CD8-positive, alpha-beta T cell (primary cell): ENCODE measurements at regions of chr19 and their contacts with region 1.

Region 1: GRCh38 chr19:29714953-29715700 is at the start of gene C19orf12:
- DNase-seq: peak; percentile 21 to 78 (median 52)
- ATAC-seq: peak; percentile 54
- H3K4me3 ChIP-seq: peak within 1 kb of the TSS; percentile 77 to 88
- H3K4me3 Mint-ChIP-seq: peak within 1 kb of the TSS; percentile 86
- H3K27ac ChIP-seq: peak within 1 kb of the TSS; percentile 89 to 99
- H3K27ac Mint-ChIP-seq: peak within 1 kb of the TSS; percentile 97
- H3K4me1 ChIP-seq: peaks cover 54% of the 10 kb centered on the region
- H3K4me1 Mint-ChIP-seq: peaks cover 53% of the 10 kb centered on the region
- H3K27me3 ChIP-seq: no peaks in the 10 kb centered on the region
- H3K27me3 Mint-ChIP-seq: no peaks in the 10 kb centered on the region
- CTCF ChIP-seq: no peak
- total RNA-seq, gene C19orf12: 7.0 to 8.9 TPM

Region 2: DNA sequence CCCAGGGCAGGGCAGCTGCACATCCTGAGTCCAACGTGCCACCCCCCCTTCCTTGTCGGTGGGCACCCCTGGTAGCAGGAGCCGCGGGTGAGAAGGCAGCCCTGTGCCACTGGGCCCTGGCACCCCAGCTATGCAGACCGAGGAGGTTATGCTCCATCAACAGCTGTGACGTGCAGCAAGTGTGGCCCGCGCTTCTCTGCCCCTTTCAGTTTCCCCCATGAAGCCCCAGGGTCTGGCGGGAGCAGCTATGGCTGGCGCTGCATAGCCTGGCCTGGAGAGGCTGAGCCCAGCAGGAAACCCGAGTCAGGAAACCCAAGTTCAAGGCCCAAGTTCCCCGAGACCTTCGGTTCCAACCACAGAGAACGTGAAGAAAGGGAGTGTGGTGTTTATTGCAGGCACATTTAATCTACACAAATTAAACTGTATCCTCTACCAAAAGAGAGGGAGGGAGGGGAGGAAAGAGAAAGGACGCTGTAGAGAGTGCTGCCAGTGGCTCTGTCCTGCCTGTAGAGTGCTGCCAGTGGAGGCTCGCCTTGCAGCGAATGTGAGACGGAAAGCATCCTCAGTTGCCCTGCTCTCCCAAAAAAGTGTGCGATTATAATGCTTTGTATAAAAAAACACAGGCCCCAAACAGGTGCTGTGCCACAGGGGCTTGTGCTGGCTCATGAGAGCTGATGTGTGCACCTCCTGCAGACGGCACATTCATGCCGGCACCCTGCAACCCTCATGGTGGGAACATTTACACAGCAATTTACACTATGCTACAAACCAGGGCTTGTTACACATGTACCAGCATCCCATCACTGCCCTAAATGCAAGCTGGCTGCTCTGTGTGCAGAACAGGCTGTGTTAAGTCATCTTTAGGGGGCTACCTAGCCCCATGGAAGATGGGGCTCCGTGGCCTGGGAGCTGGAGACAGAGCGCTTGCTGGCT is 92.7 kb before region 1 on chr19:
- CTCF ChIA-PET with region 1: interaction called, 18 read pairs
- POLR2A ChIA-PET with region 1: no interaction called
- intact Hi-C with region 1: no loop called
- DNase-seq: peak in 6 of 9 experiments; percentile 26 to 73 (median 57)
- ATAC-seq: peak; percentile 65
- H3K4me3 ChIP-seq: peak overlapping the region; percentile 1 to 13
- H3K4me3 Mint-ChIP-seq: peak overlapping the region; percentile 68
- H3K27ac ChIP-seq: peak overlapping the region; percentile 2 to 66
- H3K27ac Mint-ChIP-seq: peak overlapping the region; percentile 75
- H3K4me1 ChIP-seq: peaks cover 47% of the 10 kb centered on the region
- H3K4me1 Mint-ChIP-seq: peaks cover 46% of the 10 kb centered on the region
- H3K27me3 ChIP-seq: no peaks in the 10 kb centered on the region
- H3K27me3 Mint-ChIP-seq: no peaks in the 10 kb centered on the region
- CTCF ChIP-seq: no peak

Region 3: DNA sequence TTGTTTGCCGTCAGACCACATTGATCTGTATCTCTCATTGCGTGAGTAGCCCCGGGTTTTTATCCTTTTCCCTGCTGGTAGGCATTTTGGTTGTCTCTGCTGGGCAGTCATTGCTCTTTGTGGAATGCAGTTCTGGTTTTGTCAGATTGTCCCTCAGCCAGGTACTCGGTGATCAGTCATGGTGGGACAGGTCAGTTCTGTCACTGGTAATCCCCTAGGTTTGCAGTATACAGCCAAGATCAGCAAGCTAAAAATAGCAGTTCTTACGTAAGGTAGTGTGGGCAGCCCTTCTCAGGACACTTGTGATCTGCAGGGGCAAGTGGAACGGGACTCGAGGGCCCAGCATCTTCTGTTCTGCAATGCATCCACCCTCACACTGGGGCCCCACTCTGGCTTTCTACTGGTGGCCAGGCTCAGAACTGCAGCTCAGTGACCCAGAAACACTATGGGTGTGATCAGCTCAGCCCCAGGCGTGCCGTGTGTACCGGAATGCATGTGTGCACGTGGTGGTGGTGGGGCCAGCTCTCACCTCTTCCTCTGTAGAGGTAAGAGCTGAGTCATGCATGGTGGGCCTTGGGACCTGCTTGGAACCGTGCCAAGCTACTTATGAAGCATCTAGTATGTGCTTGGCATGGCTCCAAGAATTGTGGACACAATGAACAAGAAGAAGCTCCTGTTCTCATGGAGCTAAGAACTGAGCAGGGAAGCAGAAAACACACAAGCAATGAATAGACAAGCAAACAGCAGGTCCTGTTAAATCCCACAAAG is 43.5 kb before region 1 on chr19:
- CTCF ChIA-PET with region 1: interaction called, 79 read pairs
- POLR2A ChIA-PET with region 1: interaction called, 47 read pairs
- intact Hi-C with region 1: loop called (anchors 2 kb)
- DNase-seq: peak; percentile 73 to 96 (median 91)
- ATAC-seq: peak; percentile 62
- H3K4me3 ChIP-seq: peak overlapping the region; percentile 16 to 26
- H3K4me3 Mint-ChIP-seq: peak overlapping the region; percentile 49
- H3K27ac ChIP-seq: peak overlapping the region; percentile 80 to 84
- H3K27ac Mint-ChIP-seq: peak overlapping the region; percentile 94
- H3K4me1 ChIP-seq: peaks cover 97% of the 10 kb centered on the region
- H3K4me1 Mint-ChIP-seq: peaks cover 90% of the 10 kb centered on the region
- H3K27me3 ChIP-seq: no peaks in the 10 kb centered on the region
- H3K27me3 Mint-ChIP-seq: no peaks in the 10 kb centered on the region
- CTCF ChIP-seq: peak; percentile 62

Region 4: DNA sequence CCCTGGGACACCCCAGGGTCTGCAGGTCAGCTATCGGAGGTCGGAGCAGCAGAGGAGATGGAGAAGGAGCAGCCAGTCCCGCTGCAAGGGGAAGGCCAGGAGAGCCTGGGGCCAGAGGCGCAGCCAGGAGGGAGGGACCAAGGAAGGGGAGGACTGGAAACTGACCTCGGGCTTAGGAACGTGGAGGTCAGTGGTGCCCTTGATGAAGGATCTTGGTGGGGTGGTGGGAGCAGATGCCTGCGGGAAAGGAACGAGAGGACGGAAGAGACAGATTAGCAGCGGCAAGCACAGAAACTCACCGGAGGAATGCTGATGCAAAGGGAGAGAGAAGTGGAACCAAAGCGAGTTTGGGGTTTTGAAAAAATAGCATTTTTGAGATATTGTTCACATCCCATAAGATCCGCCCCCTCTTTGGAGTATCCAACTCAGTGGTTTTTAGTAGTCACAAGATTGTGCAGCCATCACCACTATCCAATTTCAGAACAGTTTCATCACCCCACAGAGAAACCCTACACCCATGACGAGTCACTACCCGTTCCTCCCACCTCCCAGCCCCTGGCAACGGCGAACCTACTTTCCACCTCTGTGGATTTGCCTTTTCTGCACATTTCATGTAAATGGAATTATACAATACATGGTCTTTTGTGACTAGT is 27.8 kb before region 1 on chr19:
- CTCF ChIA-PET with region 1: interaction called, 371 read pairs
- POLR2A ChIA-PET with region 1: interaction called, 4 read pairs
- intact Hi-C with region 1: no loop called
- DNase-seq: no peak
- ATAC-seq: no peak
- H3K4me3 ChIP-seq: no peak overlapping the region
- H3K4me3 Mint-ChIP-seq: no peak overlapping the region
- H3K27ac ChIP-seq: no peak overlapping the region
- H3K27ac Mint-ChIP-seq: no peak overlapping the region
- H3K4me1 ChIP-seq: peaks cover 13% of the 10 kb centered on the region
- H3K4me1 Mint-ChIP-seq: peaks cover 26% of the 10 kb centered on the region
- H3K27me3 ChIP-seq: no peaks in the 10 kb centered on the region
- H3K27me3 Mint-ChIP-seq: no peaks in the 10 kb centered on the region
- CTCF ChIP-seq: no peak

Region 5: GRCh38 chr19:29704562-29705558 is 10.3 kb before region 1 on chr19:
- CTCF ChIA-PET with region 1: interaction called, 81 read pairs
- POLR2A ChIA-PET with region 1: interaction called, 6 read pairs
- intact Hi-C with region 1: no loop called
- DNase-seq: peak in 1 of 9 experiments; percentile 27
- ATAC-seq: peak; percentile 66
- H3K4me3 ChIP-seq: no peak overlapping the region
- H3K4me3 Mint-ChIP-seq: no peak overlapping the region
- H3K27ac ChIP-seq: no peak overlapping the region
- H3K27ac Mint-ChIP-seq: peak overlapping the region; percentile 75
- H3K4me1 ChIP-seq: peaks cover 33% of the 10 kb centered on the region
- H3K4me1 Mint-ChIP-seq: peaks cover 31% of the 10 kb centered on the region
- H3K27me3 ChIP-seq: no peaks in the 10 kb centered on the region
- H3K27me3 Mint-ChIP-seq: no peaks in the 10 kb centered on the region
- CTCF ChIP-seq: no peak

Region 6: DNA sequence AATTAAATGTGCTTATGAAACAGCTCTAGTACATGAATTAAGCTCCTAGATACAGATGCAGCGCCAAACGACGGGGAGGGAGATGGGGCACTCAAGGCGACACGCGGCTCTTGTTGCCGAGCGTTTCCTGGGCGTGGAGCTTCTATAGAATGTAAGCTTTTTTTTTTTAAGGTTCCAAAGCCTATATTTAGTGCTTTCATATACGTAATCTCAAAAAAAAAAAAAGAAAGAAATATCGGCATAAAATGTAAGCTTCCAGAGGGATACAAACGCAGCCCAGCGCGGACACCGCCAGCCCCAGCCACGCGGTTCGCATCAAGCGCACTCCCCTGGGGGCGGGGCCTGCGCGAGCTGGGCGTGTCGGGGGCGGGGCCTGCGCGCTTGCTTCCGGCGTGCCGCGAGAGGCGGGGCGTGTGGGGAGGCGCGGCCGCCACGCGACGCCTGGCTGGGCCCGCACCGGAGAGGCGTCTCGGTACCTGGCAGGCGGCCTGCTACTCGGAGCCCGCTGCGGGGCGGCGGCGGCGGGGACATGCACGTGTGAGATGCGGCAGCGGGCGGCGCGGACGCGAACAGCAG is 226.8 kb after region 1 on chr19 and contains the start of gene URI1:
- CTCF ChIA-PET with region 1: no interaction called
- POLR2A ChIA-PET with region 1: interaction called, 6 read pairs
- intact Hi-C with region 1: loop called (anchors 2 to 5 kb)
- DNase-seq: peak; percentile 87 to 98 (median 92)
- ATAC-seq: peak; percentile 92
- H3K4me3 ChIP-seq: peak within 1 kb of the TSS; percentile 81 to 85
- H3K4me3 Mint-ChIP-seq: peak within 1 kb of the TSS; percentile 97
- H3K27ac ChIP-seq: peak within 1 kb of the TSS; percentile 59 to 64
- H3K27ac Mint-ChIP-seq: peak within 1 kb of the TSS; percentile 94
- H3K4me1 ChIP-seq: peaks cover 40% of the 10 kb centered on the region
- H3K4me1 Mint-ChIP-seq: peaks cover 47% of the 10 kb centered on the region
- H3K27me3 ChIP-seq: peaks cover 0 to 2% of the 10 kb centered on the region in 2 experiments
- H3K27me3 Mint-ChIP-seq: peaks cover 3% of the 10 kb centered on the region
- CTCF ChIP-seq: no peak
- total RNA-seq, gene URI1: 51.3 to 56.4 TPM